ENCODE measurements at regions of chr17 and their contacts with region 1.

Region 1: DNA sequence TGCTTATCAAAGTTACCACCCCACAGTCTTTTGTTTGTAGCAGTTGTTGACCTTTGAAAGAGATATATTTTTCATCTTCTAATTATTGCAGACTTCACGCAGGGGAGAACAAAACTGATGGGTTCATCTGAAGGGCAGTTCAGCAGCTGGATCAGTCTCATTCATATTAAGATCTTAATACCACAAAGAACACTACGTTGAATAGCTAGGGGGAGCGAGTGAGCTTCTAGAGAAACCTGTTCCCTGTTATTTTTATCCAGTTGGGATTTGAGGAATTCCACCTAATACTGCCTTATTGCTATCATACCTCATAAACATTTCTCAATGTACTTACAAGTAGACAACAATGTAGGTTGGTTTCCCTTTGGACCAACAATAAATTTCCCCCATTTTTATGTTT is 306.1 kb upstream of the KIF2B start:
- DNase-seq: peak; percentile 5
- H3K4me3 ChIP-seq: no peak overlapping the region
- H3K27ac ChIP-seq: no peak overlapping the region
- H3K4me1 ChIP-seq: no peaks in the 10 kb centered on the region
- H3K27me3 ChIP-seq: no peaks in the 10 kb centered on the region
- CTCF ChIP-seq: peak; percentile 27 to 62

Region 2: DNA sequence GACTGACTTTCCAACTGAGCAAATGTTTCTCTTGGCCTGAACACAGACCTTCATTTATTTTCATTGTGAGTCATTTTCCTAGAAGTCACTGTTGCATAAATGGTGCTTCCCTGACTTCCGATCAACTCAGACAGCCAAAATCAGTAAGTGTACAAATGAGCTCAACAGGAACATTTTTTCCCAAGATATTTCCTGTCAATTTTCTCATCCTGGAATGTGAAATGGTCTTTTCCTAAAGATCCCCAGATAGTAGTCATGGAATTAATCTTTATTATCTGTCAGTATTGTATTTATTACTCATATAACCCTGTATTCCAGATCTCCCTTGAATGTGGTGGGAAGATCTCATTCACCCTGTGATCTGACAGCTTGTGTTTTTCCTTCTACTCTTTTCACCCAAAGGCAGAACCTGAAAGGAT is 54.2 kb before region 1 on chr17:
- CTCF ChIA-PET with region 1: no interaction called
- dilution Hi-C with region 1: no loop called
- in situ Hi-C with region 1: no loop called
- intact Hi-C with region 1: no loop called
- DNase-seq: peak; percentile 72
- H3K4me3 ChIP-seq: peak overlapping the region in 1 of 3 experiments; percentile 1
- H3K27ac ChIP-seq: no peak overlapping the region
- H3K4me1 ChIP-seq: peaks cover 9% of the 10 kb centered on the region
- H3K27me3 ChIP-seq: peaks cover 3% of the 10 kb centered on the region
- CTCF ChIP-seq: no peak

Region 3: GRCh38 chr17:53696286-53696685 is 179.7 kb after region 1 on chr17:
- CTCF ChIA-PET with region 1: no interaction called
- dilution Hi-C with region 1: no loop called
- in situ Hi-C with region 1: no loop called
- intact Hi-C with region 1: loop called (anchors 2 kb)
- DNase-seq: no peak
- H3K4me3 ChIP-seq: no peak overlapping the region
- H3K27ac ChIP-seq: no peak overlapping the region
- H3K4me1 ChIP-seq: no peaks in the 10 kb centered on the region
- H3K27me3 ChIP-seq: no peaks in the 10 kb centered on the region
- CTCF ChIP-seq: no peak

Region 4: DNA sequence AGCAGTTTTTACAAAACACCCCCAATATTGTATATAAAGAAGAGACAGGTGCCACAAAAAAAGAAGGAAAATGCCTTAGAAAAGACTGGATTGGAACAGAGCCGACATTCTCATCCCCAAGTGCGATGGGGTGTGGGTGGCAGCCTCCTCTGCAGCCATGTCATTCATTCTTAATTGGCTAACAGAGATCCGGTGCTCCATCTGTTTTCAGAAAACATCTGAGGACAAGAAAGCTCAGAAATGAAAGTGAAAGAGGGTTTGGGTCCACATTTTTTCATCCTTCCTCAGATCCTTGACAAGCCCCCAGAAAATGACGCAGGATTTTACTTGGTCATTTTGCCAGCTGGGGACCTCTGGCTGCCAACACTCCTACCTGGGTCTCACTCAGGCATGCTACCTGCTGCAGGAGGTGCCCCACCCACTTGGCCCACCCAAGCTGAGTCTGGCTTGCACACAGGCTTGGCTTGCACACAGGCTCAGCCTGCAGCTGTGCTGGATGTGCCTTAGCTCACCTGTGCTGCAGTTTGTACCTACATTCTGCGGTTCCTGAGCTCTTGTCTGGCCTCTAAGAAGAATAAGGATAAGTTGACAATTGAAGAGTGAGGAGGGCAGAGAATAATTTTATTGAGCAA is 328.0 kb after region 1 on chr17:
- CTCF ChIA-PET with region 1: no interaction called
- dilution Hi-C with region 1: no loop called
- in situ Hi-C with region 1: no loop called
- intact Hi-C with region 1: loop called (anchors 10 kb)
- DNase-seq: no peak
- H3K4me3 ChIP-seq: no peak overlapping the region
- H3K27ac ChIP-seq: no peak overlapping the region
- H3K4me1 ChIP-seq: no peaks in the 10 kb centered on the region
- H3K27me3 ChIP-seq: no peaks in the 10 kb centered on the region
- CTCF ChIP-seq: no peak